PC-9 (cell line): ENCODE measurements at regions of chrX and their contacts with region 1.

Region 1: GRCh38 chrX:10615931-10616775 is 4.2 kb downstream of the MID1 start:
- DNase-seq: peak in 1 of 2 experiments; percentile 43
- H3K4me3 ChIP-seq: peak overlapping the region; percentile 63; the same call in 1 of the 2 replicates
- H3K27ac ChIP-seq: peak overlapping the region; percentile 91
- H3K4me1 ChIP-seq: peaks cover 49% of the 10 kb centered on the region
- H3K27me3 ChIP-seq: no peaks in the 10 kb centered on the region
- CTCF ChIP-seq: peak; percentile 68

Region 2: DNA sequence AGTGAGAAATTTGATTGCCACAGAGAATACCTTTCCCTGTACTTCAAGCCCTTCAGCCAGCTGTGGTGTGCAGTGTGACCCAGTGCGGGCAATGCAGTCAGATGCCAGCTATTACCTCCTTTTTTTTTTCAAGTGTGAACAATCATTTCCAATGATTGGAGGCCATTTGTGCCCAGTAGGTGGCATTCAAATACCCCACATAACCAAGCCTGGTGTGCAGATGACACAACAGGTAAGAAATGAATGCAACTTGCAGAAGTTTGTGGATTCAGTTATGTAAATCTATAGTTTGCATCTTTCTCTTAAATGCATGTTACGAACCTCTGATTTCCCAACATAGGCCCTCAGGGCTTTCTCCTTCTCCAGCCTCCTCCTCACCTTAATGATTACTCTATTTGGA is 361.4 kb before region 1 on chrX:
- CTCF ChIA-PET with region 1: no interaction called
- POLR2A ChIA-PET with region 1: no interaction called
- intact Hi-C with region 1: loop called (anchors 5 kb)
- DNase-seq: peak; percentile 20 to 57
- H3K4me3 ChIP-seq: no peak overlapping the region
- H3K27ac ChIP-seq: no peak overlapping the region
- H3K4me1 ChIP-seq: no peaks in the 10 kb centered on the region
- H3K27me3 ChIP-seq: no peaks in the 10 kb centered on the region
- CTCF ChIP-seq: peak; percentile 56

Region 3: GRCh38 chrX:10628906-10629305 is 12.8 kb after region 1 on chrX:
- CTCF ChIA-PET with region 1: no interaction called
- POLR2A ChIA-PET with region 1: interaction called, 4 read pairs
- intact Hi-C with region 1: loop called (anchors 1 kb)
- DNase-seq: peak; percentile 39 to 68
- H3K4me3 ChIP-seq: no peak overlapping the region
- H3K27ac ChIP-seq: peak overlapping the region; percentile 56; the same call in 1 of the 2 replicates
- H3K4me1 ChIP-seq: peaks cover 34% of the 10 kb centered on the region
- H3K27me3 ChIP-seq: no peaks in the 10 kb centered on the region
- CTCF ChIP-seq: no peak

Region 4: DNA sequence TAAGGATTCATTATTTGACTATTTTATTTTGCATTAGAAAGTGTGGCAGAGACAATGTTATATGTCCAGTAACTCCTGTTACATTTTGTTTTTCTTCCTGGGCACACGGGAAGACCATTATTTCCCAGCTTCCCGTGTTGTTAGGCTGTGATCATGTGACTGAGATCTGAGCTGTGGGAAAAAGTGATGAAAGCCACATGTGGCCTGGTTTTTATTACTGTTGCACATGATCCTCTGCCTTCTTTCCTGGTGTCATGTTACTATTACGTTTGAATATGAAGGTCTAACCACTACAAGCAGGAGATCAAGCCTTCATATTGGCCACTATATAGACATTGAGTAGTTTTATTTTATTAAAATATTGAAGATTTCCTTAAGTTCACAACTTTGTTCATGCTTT is 32.5 kb after region 1 on chrX:
- CTCF ChIA-PET with region 1: no interaction called
- POLR2A ChIA-PET with region 1: interaction called, 13 read pairs
- intact Hi-C with region 1: no loop called
- DNase-seq: no peak
- H3K4me3 ChIP-seq: no peak overlapping the region
- H3K27ac ChIP-seq: no peak overlapping the region
- H3K4me1 ChIP-seq: no peaks in the 10 kb centered on the region
- H3K27me3 ChIP-seq: no peaks in the 10 kb centered on the region
- CTCF ChIP-seq: no peak

Region 5: DNA sequence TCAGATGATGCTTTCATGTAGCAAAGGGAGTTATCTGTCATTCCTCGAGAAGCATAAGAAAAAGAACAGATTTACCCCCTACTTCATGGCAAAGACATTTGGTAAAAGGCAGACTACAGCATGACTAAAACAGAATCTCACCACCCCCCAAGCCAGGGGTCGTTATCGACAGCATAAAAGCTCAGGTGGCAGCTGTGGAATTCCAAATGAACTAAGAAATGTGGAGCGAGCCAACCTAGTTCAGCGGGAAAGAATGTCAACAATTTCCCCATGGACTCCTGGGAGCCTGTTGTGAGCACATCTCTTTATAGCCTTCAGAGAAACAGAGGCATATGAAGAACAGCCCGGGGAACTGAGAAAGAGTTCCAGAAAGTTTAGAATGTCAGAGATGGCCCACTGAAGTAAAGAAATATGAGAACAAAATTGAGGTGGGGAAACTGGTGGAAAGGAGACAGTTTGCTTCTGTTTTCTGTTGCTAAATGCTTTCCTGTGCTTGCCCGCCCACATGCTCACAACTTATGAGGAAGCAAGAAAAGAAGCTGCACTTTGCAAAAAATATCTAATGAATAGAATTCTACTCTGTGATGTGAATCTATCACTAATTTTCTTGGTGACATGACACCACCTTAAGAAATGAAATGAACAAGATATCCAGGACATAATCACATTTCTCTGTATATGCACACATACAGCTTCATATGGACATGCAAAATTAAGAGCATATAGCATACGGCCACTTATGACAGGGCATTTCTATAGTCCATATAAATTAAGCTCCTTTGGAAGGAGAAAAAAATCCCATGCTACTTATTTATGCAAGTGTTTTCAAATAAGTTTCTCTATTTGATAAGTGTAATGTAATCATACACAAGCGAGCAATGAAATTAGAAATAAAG is 139.5 kb after region 1 on chrX:
- CTCF ChIA-PET with region 1: no interaction called
- POLR2A ChIA-PET with region 1: no interaction called
- intact Hi-C with region 1: loop called (anchors 10 kb)
- DNase-seq: peak in 1 of 2 experiments; percentile 17
- H3K4me3 ChIP-seq: no peak overlapping the region
- H3K27ac ChIP-seq: no peak overlapping the region
- H3K4me1 ChIP-seq: no peaks in the 10 kb centered on the region
- H3K27me3 ChIP-seq: no peaks in the 10 kb centered on the region
- CTCF ChIP-seq: no peak

Region 6: GRCh38 chrX:11239233-11239632 is 623.1 kb after region 1 on chrX:
- CTCF ChIA-PET with region 1: no interaction called
- POLR2A ChIA-PET with region 1: no interaction called
- intact Hi-C with region 1: no loop called
- DNase-seq: peak in 1 of 2 experiments; percentile 45
- H3K4me3 ChIP-seq: no peak overlapping the region
- H3K27ac ChIP-seq: no peak overlapping the region
- H3K4me1 ChIP-seq: no peaks in the 10 kb centered on the region
- H3K27me3 ChIP-seq: no peaks in the 10 kb centered on the region
- CTCF ChIP-seq: no peak

Region 7: GRCh38 chrX:12339921-12340320 is 1723.8 kb after region 1 on chrX:
- CTCF ChIA-PET with region 1: no interaction called
- POLR2A ChIA-PET with region 1: no interaction called
- intact Hi-C with region 1: no loop called
- DNase-seq: no peak
- H3K4me3 ChIP-seq: no peak overlapping the region
- H3K27ac ChIP-seq: no peak overlapping the region
- H3K4me1 ChIP-seq: no peaks in the 10 kb centered on the region
- H3K27me3 ChIP-seq: no peaks in the 10 kb centered on the region
- CTCF ChIP-seq: no peak